ENCODE measurements at regions of chr1 and their contacts with region 1.

Region 1: GRCh38 chr1:205313563-205314308 is 7.8 kb downstream of the NUAK2 start:
- DNase-seq: peak; percentile 82
- ATAC-seq: peak; percentile 94
- H3K4me3 Mint-ChIP-seq: peak overlapping the region; percentile 54
- H3K27ac Mint-ChIP-seq: peak overlapping the region; percentile 99
- H3K4me1 Mint-ChIP-seq: peaks cover 70% of the 10 kb centered on the region
- H3K27me3 Mint-ChIP-seq: no peaks in the 10 kb centered on the region; the same call in none of the 2 replicates
- CTCF ChIP-seq: no peak

Region 2: GRCh38 chr1:205284343-205285144 is 29.2 kb before region 1 on chr1:
- CTCF ChIA-PET with region 1: interaction called, 10 read pairs
- POLR2A ChIA-PET with region 1: interaction called, 7 read pairs
- DNase-seq: peak; percentile 80
- ATAC-seq: peak; percentile 89
- H3K4me3 Mint-ChIP-seq: no peak overlapping the region
- H3K27ac Mint-ChIP-seq: peak overlapping the region; percentile 90
- H3K4me1 Mint-ChIP-seq: peaks cover 49% of the 10 kb centered on the region
- H3K27me3 Mint-ChIP-seq: no peaks in the 10 kb centered on the region
- CTCF ChIP-seq: no peak

Region 3: DNA sequence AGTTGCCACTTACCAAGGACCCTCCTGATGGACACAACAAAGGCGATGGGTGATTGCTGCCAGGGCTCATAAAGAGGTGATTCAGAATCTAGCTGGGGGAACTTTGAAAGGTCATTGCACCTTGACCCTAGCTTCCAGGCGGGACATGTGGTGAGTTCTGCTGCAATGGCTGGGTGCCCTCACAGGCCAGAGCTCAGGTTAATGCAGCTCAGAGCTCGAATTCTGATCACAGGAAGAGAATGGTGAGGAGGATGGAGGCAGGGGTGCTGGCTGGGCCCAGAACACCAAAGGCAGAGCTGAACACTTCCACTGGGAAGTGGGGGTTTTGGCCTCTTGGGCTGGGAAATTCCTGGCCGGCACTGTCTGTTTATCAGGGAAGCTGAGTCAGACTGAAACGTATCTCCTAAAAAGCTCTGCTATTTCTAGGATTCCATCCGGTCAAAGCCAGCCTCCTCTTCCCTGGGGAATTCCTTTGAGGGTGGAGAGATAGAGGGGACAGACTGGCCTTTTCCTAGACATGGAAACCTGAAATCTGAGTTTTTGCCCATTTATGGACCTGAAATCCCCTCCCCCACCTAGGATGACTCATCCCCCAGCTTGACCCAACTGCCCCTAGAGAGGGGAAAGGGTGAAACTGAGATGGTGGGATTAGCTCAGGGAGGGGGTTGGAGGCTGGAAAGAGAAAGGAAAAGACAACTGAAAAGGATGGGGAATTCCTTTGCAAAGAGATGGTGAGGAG is 19.4 kb before region 1 on chr1:
- CTCF ChIA-PET with region 1: interaction called, 16 read pairs
- POLR2A ChIA-PET with region 1: interaction called, 186 read pairs
- DNase-seq: peak; percentile 58
- ATAC-seq: peak; percentile 58
- H3K4me3 Mint-ChIP-seq: peak overlapping the region; percentile 20; the same call in 1 of the 2 replicates
- H3K27ac Mint-ChIP-seq: peak overlapping the region; percentile 100
- H3K4me1 Mint-ChIP-seq: peaks cover 57% of the 10 kb centered on the region
- H3K27me3 Mint-ChIP-seq: no peaks in the 10 kb centered on the region; the same call in 1 of the 2 replicates
- CTCF ChIP-seq: no peak

Region 4: GRCh38 chr1:205300886-205301821 is 12.6 kb before region 1 on chr1:
- CTCF ChIA-PET with region 1: interaction called, 15 read pairs
- POLR2A ChIA-PET with region 1: interaction called, 186 read pairs
- DNase-seq: peak; percentile 98
- ATAC-seq: peak; percentile 83
- H3K4me3 Mint-ChIP-seq: peak overlapping the region; percentile 54
- H3K27ac Mint-ChIP-seq: peak overlapping the region; percentile 100
- H3K4me1 Mint-ChIP-seq: peaks cover 63% of the 10 kb centered on the region
- H3K27me3 Mint-ChIP-seq: no peaks in the 10 kb centered on the region
- CTCF ChIP-seq: no peak